Body of pancreas (tissue), 4 donors: ENCODE measurements at regions of chr12 and their contacts with region 1.

Region 1: DNA sequence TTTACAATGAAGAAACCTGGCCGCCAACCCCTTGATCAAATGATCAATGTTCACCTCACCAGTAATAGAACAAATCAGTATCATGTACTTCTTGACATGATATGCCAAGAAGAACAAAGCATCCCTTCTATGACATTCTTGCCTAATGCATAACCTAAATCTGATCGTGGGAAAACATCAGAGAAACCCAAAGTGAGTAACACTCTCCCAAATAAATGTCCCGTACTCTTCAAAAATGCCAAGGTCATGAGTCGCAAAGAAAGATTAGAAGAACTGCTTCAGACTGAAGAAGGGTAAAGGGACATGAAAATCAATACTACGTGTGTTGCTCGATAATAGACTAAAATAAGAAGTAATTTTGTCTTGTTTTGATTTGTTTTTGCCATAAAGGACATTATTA is 11.4 kb upstream of the SLC25A3 start:
- DNase-seq: no peak
- ATAC-seq: no peak
- H3K4me3 ChIP-seq: no peak overlapping the region
- H3K27ac ChIP-seq: no peak overlapping the region
- H3K4me1 ChIP-seq: no peaks in the 10 kb centered on the region
- H3K27me3 ChIP-seq: no peaks in the 10 kb centered on the region
- CTCF ChIP-seq: no peak
- POLR2A ChIP-seq: no peak

Region 2: GRCh38 chr12:98544751-98545150 is 37.3 kb before region 1 on chr12:
- intact Hi-C with region 1: no loop called
- DNase-seq: no peak
- ATAC-seq: no peak
- H3K4me3 ChIP-seq: no peak overlapping the region
- H3K27ac ChIP-seq: no peak overlapping the region
- H3K4me1 ChIP-seq: no peaks in the 10 kb centered on the region
- H3K27me3 ChIP-seq: no peaks in the 10 kb centered on the region
- CTCF ChIP-seq: no peak
- POLR2A ChIP-seq: no peak

Region 3: DNA sequence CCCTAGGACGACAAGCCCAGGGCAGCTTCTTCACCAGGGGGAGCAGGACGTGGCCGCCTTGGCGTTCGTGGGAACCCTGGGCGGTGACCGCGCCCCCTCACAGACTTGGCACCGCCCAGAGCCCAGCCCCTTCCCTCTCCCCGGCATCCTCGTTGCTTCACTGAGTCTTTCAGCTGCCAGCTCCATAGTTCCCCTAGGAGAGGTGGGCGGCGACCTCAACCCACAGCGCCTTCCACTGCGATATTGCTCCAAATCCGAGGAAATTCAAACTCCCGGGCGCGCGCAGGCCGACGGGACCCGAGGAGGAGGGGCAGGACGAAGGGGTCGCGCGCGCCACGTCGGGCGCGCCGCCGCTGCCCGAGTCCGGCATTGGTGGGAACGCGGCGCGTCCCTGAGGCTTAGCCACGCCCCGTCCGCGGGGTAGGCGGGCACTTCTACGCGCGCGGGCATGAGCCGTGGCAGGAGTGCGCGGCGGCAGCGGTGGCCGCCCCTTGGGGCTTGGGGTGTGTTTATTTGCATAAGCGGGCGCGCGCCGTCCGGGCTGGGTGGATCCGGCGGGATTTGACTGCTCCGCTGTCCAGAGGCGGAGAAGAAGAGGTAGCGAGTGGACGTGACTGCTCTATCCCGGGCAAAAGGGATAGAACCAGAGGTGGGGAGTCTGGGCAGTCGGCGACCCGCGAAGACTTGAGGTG is 62.8 kb after region 1 on chr12 and contains the starts of genes APAF1 and IKBIP:
- intact Hi-C with region 1: loop called (anchors 10 kb)
- DNase-seq: peak; percentile 95 to 98 (median 97)
- ATAC-seq: peak; percentile 98
- H3K4me3 ChIP-seq: peak within 1 kb of the TSS; percentile 77 to 94
- H3K27ac ChIP-seq: peak within 1 kb of the TSS; percentile 67 to 88 (median 80)
- H3K4me1 ChIP-seq: peaks cover 19% of the 10 kb centered on the region
- H3K27me3 ChIP-seq: no peaks in the 10 kb centered on the region
- CTCF ChIP-seq: no peak
- POLR2A ChIP-seq: peak; percentile 63 to 90 (median 87)
- total RNA-seq, gene APAF1: 5.9 to 12.2 TPM
- total RNA-seq, gene IKBIP: 2.3 to 6.2 TPM

Region 4: GRCh38 chr12:98758331-98758730 is 176.2 kb after region 1 on chr12:
- intact Hi-C with region 1: no loop called
- DNase-seq: peak in 1 of 4 donors; percentile 25
- ATAC-seq: no peak
- H3K4me3 ChIP-seq: no peak overlapping the region
- H3K27ac ChIP-seq: no peak overlapping the region
- H3K4me1 ChIP-seq: no peaks in the 10 kb centered on the region
- H3K27me3 ChIP-seq: no peaks in the 10 kb centered on the region
- CTCF ChIP-seq: no peak
- POLR2A ChIP-seq: no peak